Cardiac septum (tissue), 1 donor: ENCODE measurements at regions of chr10 and their contacts with region 1.

Region 1: GRCh38 chr10:115355162-115355760 is 262.1 kb downstream of the ATRNL1 start:
- DNase-seq: no peak

Region 2: DNA sequence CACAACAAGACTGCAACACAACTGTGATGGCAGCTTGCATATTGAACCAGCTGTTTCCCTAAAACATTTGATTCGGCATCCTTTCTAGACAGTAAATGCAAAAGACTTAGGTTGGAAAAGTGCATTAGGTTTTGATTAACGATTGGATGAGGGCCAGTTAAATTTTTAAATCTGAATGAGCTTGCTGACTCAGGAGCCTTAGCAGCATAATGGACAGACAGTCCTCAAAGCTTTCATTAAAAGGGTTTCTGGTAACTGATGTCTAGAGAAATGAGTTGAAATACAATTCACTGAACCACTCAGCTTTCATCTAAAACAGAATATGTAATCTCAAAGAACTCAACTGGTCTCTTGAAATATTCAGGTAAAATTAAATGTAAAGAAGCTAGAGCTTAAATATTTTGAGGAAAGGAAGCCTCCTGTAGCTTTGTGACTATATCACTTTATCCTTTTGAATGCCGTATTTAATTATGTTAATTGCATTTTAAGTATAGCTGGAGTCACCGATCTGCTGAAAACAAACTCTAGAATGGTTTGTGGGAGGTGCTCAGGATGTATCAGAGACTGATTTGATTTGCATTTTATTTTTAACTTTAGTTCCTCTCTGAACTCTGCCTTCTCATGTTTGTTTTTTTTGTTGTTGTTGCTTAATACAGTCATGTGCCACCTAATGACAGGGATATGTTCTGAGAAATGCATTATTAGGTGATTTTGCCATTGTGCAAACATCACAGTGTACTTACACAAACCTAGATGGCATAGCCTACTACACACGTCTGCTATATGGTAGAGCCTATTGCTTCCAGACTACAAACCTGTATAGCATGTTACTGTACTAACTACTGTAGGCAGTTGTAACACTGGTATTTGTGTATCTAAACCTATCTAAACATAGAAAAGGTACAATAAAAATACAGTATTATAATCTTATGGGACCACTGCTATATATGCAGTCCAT is 291.3 kb before region 1 on chr10:
- intact Hi-C with region 1: no loop called
- DNase-seq: no peak

Region 3: DNA sequence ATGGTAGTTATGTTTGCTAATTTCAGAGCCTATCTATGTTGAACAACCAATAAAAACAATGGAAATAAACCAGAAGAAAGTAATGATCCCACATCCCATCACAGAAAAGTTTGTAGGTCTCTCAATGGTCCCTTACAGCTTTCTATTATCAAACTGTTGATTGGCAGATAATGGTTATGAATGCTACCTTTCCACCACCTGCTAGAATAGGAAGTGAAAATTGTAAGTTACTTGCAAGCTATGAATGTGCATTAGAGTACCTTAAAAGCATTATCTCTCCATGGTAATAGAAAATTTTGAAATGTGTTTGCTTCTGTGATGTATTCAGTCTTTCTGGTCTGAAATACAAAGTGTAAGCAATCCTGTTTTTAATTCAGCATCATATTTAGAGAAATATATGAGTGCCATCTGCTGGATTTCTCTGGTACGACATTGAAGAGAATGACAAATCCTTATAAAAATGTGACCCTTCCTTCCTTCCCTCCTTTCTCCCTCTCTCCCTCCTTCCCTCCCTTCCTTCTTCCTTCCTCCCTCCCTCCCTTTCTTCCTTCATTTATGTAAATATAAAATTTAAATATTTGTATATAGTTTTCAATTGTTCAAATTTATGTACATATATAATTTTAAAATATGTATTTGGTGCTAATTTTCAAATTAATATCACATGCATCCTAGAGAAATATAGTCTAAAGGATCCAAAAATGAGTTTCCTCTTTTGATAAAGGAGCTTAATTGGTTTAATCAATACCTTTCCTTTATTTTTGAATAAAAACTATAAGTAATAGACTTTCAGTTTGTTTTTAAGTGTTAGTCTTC is 1030.9 kb after region 1 on chr10:
- intact Hi-C with region 1: loop called (anchors 10 kb)
- DNase-seq: no peak

Region 4: GRCh38 chr10:116771101-116771958 is 1416.1 kb after region 1 on chr10:
- intact Hi-C with region 1: no loop called
- DNase-seq: no peak